Motor neuron (in vitro differentiated cells): ENCODE measurements at regions of chr3 and their contacts with region 1.

Region 1: DNA sequence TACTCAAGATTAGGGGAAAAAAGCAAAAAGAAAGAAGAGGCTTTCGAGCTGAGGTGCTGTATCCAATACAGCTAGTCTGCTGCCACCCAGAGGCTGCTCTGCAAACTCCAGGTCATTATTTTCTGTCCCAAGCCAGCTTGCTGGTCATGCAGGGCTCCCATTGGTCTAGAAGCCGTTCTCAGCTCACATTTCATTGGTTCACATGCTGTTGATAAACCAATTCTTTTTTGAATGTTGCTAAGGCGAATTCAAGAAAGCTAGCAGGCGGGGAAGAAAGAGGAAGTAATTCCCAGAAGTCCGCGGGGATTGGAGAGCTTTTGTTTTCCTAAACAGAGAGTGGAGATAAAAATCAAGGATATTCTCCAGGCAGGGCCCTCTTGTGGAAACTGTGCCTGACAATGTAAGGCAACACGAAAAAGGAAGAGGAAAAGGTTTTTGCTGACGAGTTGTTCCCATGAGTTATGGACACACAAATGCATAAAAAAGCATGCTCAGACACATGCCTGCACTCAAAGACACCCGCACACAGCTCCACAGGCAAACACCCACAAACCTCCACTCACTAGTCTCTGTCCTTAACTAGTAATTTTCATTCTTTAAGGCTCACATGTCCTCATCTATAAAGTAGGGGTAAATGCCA is 33.4 kb downstream of the FSTL1 start:
- ATAC-seq: peak; percentile 85 to 97 (median 94)
- H3K4me3 ChIP-seq: peak overlapping the region; percentile 17 to 37 (median 22)
- H3K27ac ChIP-seq: peak overlapping the region in 1 of 2 donors; percentile 14
- H3K4me1 ChIP-seq: peaks cover 9 to 25% of the 10 kb centered on the region in 2 donors

Region 2: GRCh38 chr3:120245386-120245785 is 172.0 kb before region 1 on chr3:
- in situ Hi-C with region 1: loop called in 3 of 9 experiments (anchors 10 to 25 kb)
- ATAC-seq: peak in 1 of 8 experiments; percentile 15
- H3K4me3 ChIP-seq: no peak overlapping the region
- H3K27ac ChIP-seq: no peak overlapping the region
- H3K4me1 ChIP-seq: peaks cover 11% of the 10 kb centered on the region in 2 donors